ENCODE measurements at regions of chr7 and their contacts with region 1.

Region 1: DNA sequence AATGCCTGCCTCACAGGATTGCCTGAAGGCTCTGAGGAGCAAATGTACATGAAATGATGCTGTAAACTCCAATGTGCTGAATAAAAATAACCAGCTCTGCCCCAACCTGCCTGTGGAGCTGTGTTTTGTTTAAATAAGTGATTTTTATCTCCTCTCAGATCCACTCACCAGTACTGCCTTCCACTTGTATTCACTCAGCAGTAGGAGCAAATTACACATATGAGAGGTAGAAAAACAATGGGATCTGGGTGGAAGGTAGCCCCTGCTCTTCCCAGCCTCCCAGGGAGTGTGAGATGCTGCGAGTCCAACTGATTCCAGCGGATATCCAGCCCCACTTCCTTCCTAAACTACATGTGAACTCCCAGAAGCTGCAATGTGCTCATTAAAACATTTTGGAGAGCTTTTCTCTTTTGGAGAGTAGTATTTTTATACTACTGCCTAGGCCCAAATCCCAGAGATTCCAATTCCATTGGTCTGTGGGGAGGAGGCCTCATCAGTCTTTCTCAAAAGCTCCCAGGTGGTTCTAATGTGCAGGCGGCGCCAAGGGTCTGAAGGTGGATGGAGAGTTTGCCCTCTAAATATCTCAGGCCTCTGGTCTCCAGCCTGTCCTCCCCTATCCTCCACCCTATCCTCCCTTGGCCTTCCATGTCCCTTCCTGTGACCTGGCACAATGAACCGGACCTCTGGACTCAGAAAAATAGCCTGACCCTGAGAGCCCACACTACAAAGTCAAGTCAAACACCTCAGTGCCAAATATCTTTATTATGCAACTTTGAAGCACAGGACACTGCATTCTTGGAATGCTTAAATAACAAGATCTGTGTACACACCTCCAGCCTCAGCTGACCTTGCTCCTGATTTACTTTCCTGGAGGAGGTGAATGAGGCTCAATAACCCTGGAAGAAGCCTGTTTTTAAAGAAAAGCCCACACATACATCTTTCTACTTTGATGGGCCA is 46.2 kb downstream of the CPVL start:
- DNase-seq: no peak
- H3K4me3 ChIP-seq: no peak overlapping the region
- H3K27ac ChIP-seq: no peak overlapping the region
- H3K4me1 ChIP-seq: no peaks in the 10 kb centered on the region
- H3K27me3 ChIP-seq: no peaks in the 10 kb centered on the region
- CTCF ChIP-seq: no peak
- EP300 ChIP-seq: no peak
- POLR2A ChIP-seq: no peak

Region 2: GRCh38 chr7:28926871-28927597 is 173.1 kb before region 1 on chr7:
- intact Hi-C with region 1: loop called (anchors 2 to 5 kb)
- DNase-seq: peak; percentile 54 to 73 (median 67)
- H3K4me3 ChIP-seq: peak overlapping the region; percentile 59
- H3K27ac ChIP-seq: no peak overlapping the region
- H3K4me1 ChIP-seq: no peaks in the 10 kb centered on the region
- H3K27me3 ChIP-seq: no peaks in the 10 kb centered on the region
- CTCF ChIP-seq: peak; percentile 37 to 75 (median 64)
- EP300 ChIP-seq: no peak
- POLR2A ChIP-seq: no peak